Common myeloid progenitor, CD34-positive (primary cell): ENCODE measurements at regions of chr20 and their contacts with region 1.

Region 1: DNA sequence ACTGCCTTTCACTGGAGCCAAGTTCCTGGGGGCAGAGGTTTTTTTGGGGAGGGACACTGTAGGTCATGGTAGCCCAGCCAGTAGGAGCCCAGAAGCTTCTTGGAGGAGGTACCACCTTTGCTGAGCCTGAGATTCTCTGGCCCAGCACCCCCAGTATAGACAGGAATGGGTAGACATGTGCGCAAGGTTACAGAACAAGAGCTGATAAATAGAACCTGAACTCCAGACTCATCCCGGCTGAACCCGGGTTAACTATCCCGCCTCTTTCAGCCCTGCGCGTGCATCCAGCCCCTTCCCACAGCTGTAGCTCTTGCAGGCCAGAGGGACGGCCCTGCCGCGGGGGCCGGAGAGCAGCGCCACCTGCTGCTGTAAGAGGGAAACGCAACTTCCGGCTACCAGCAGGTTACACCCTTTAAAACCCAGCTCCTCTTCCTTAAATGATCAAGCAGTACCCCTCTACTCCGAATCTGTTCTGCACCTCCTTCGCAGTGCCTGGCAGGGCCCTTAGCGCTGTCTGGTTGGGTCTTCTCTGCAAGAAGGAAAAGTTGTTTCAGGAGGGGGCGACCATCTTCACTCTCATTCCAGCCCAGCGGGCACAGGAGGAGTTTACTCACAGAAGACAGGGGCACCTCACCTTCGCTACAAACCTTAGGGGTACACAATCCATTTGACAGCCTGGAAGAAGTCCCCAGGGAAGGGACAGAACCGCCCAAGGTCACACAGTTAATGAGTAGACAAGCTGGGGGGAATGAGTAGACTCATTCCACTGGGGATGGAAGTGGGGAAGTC is 7.5 kb downstream of the SRXN1 start:
- DNase-seq: peak; percentile 80 to 86 (median 81)
- H3K4me3 ChIP-seq: no peak overlapping the region
- H3K27ac ChIP-seq: no peak overlapping the region
- H3K4me1 ChIP-seq: peaks cover 0 to 10% (median 6%) of the 10 kb centered on the region in 4 experiments
- H3K27me3 ChIP-seq: peaks cover 0 to 5% (median 0%) of the 10 kb centered on the region in 5 experiments

Region 2: GRCh38 chr20:561437-562231 is 83.9 kb before region 1 on chr20:
- CTCF ChIA-PET with region 1: interaction called, 137 read pairs
- POLR2A ChIA-PET with region 1: interaction called, 3 read pairs
- DNase-seq: peak; percentile 71 to 86 (median 79)
- H3K4me3 ChIP-seq: no peak overlapping the region
- H3K27ac ChIP-seq: no peak overlapping the region
- H3K4me1 ChIP-seq: no peaks in the 10 kb centered on the region
- H3K27me3 ChIP-seq: peaks cover 0 to 2% (median 0%) of the 10 kb centered on the region in 5 experiments

Region 3: DNA sequence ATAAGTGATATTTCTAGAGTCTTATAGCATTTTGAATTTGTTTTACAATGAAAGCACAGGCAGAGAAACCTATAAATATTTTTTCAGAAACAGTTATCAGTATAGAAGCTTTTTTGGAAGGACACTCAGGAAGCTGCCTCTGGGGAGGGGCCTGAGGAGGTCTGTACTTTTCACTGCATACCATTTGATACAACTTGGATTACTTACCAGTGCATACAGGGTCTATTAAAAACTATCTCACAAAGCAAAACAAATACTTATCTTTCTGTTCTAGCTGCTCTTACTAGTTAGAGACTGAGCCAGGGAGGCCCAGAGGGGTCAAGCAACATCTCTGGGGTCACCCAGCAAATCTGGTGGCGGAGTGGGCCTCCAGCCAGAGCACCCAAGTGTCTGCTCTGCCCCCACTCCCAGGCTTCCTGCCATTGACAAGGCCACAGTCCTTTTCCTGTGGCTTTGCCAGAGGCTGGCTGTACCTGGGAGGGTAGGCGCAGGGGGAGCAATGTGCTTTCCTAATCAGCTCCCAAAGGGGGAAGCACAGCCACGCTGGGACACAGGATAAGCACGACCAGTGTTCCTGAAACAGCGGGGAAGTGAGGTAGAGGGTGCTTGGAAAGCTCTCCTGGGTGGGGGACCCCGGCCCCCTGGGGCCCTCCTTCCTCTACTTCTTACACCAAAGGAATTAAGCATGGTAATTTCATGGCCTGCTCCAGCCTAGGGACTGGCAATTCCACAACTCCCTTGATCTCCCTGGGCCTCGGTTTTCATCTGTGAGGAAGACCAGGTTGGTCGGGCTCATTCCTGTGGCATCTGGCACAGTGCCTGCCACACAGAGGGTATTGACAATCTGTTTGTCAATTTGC is 43.2 kb before region 1 on chr20:
- CTCF ChIA-PET with region 1: interaction called, 21 read pairs
- POLR2A ChIA-PET with region 1: no interaction called
- DNase-seq: no peak
- H3K4me3 ChIP-seq: no peak overlapping the region
- H3K27ac ChIP-seq: no peak overlapping the region
- H3K4me1 ChIP-seq: peaks cover 0 to 9% (median 6%) of the 10 kb centered on the region in 4 experiments
- H3K27me3 ChIP-seq: no peaks in the 10 kb centered on the region

Region 4: DNA sequence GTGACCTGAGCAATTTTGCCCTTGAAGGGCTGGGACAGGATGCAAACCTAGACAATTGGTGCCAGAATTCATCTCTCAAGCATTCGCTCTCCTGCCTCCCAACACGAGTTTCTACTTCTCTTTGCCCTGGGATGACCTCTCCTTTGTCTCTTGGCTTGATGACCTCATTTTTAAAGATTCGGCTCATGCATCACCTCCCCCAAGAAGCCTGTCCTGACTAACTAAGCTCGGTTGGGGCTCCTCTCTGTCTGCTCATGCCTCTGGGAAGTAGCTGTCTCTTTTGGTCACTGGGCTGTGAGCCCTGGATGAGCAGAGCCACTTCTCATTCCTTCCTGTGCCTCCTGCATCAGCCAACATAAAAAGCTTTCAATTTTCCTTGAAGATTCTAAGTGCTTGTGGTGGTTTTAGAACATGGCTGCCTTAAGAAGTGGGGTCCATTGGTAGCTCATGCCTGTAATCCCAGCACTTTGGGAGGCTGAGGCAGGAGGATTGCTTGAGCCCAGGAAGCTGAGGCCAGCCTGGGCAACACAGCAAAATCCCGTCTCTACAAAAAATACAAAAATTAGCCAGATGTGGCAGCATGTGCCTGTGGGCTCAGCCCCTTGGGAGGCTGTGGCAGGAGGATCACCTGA is 24.3 kb before region 1 on chr20:
- CTCF ChIA-PET with region 1: interaction called, 11 read pairs
- POLR2A ChIA-PET with region 1: no interaction called
- DNase-seq: no peak
- H3K4me3 ChIP-seq: no peak overlapping the region
- H3K27ac ChIP-seq: no peak overlapping the region
- H3K4me1 ChIP-seq: peaks cover 1 to 30% (median 15%) of the 10 kb centered on the region in 4 experiments
- H3K27me3 ChIP-seq: no peaks in the 10 kb centered on the region

Region 5: DNA sequence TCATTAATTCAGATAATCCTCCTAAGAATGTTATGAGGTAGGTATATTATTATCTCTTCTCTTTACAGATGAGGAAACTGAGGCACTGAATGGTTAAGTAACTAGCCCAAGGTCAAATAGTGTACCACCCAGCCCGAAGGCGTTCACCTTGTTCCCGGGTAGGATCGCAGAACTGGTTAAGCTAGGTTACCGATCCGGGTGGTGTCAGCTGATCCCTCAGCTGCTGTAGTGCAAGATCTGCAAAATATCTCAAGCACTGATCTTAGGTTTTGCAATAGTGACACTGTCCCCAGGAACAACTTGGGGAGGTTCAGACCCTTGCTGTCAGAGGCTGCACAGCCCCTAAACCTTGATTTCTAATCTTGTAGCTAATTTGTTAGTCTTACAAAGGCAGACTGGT is 94.6 kb after region 1 on chr20:
- CTCF ChIA-PET with region 1: interaction called, 13 read pairs
- POLR2A ChIA-PET with region 1: no interaction called
- DNase-seq: no peak
- H3K4me3 ChIP-seq: no peak overlapping the region
- H3K27ac ChIP-seq: no peak overlapping the region
- H3K4me1 ChIP-seq: no peaks in the 10 kb centered on the region
- H3K27me3 ChIP-seq: peaks cover 0 to 1% (median 0%) of the 10 kb centered on the region in 5 experiments